ENCODE measurements at regions of chr22 and their contacts with region 1.

Region 1: DNA sequence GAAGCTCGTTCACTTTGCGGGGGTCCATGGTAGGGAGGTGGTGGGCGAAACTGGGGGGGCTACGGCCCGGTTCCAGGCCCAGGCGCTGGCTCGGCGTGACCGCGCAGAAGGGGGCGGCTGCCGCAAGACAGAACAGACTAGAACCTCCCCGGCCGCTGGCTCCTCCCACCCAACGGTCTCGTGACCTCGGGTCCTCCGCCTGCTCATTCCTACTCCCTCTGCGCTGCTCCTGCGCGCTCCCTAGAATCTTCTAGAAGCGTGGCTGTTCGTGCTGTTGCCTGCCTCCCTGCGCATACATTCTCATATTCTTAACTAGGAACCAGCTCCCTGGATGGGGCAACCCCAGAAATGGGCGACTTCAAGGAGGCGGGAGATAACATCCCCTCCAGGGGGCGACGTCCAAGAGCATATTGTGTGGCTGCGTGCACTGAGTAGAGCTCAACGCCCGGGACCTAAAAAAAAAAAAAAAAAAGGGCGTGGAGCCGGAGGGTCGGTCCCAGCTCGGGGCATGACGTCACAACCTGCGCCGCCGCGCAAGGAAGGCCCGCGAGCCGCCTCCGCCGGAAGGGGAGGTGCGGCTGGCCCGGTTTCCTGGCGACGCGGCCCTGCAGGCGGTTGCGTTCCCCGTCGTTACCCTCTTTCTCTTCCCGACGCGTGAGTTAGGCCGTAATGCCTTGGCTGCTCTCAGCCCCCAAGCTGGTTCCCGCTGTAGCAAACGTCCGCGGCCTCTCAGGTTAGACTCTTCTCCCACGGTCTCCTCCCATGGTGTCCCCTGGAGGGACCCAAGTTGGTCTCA is at the starts of genes ST13 and XPNPEP3:
- DNase-seq: peak; percentile 98
- ATAC-seq: peak; percentile 96 to 97
- H3K4me3 ChIP-seq: peak within 1 kb of the TSS; percentile 79 to 98 (median 90)
- H3K27ac ChIP-seq: peak within 1 kb of the TSS; percentile 96 to 99 (median 98)
- H3K4me1 ChIP-seq: peaks cover 48 to 56% of the 10 kb centered on the region in 2 donors
- H3K27me3 ChIP-seq: no peaks in the 10 kb centered on the region
- CTCF ChIP-seq: peak in 4 of 5 experiments; percentile 18 to 55 (median 25)
- POLR2A ChIP-seq: peak; percentile 88
- total RNA-seq, gene ST13: 122 to 265 (median 197) TPM
- total RNA-seq, gene XPNPEP3: 3.6 to 12.4 (median 7.4) TPM

Region 2: DNA sequence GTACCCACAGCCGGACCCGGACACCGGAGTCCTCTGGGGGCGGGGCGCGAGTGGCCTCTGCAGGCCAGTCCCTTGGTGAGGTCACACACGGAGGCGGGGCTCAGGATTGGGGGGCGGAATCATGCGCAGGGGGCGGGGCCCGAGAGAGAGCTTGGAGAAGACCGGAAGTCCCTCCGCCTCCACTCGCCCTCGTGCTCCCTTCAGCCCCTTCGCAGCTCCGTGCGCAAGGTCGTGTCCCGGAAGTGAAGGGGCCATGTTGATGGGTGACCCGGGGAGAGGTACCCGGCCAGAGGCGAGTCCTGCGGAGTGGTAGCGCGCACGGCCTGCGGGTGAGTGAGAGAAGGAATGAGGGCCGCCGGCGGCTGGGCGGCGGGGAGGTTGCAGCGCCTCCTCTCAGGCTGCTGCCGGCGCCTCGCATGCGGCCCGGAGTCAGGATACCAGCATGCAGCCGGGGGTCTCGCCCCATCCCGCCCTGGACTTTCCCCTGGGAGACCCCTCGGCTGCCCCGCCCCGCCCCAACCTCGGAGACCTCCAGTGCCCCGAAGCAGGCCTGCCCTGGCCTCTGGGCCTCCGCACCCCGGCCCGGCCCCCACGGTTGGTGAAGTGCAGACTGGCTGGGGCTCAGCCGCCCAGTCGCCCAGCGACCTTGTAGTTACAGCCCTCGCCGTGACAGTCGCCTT is 1354.5 kb before region 1 on chr22 and contains the start of gene MIEF1:
- in situ Hi-C with region 1: no loop called
- intact Hi-C with region 1: loop called (anchors 10 kb)
- DNase-seq: peak; percentile 97 to 98
- ATAC-seq: peak; percentile 95 to 97
- H3K4me3 ChIP-seq: peak within 1 kb of the TSS; percentile 89 to 94 (median 90)
- H3K27ac ChIP-seq: peak within 1 kb of the TSS; percentile 85 to 95 (median 90)
- H3K4me1 ChIP-seq: peaks cover 29 to 35% of the 10 kb centered on the region in 2 donors
- H3K27me3 ChIP-seq: no peaks in the 10 kb centered on the region
- CTCF ChIP-seq: no peak
- POLR2A ChIP-seq: peak; percentile 47 to 76
- total RNA-seq, gene MIEF1: 11.4 to 25.4 (median 12.9) TPM

Region 3: DNA sequence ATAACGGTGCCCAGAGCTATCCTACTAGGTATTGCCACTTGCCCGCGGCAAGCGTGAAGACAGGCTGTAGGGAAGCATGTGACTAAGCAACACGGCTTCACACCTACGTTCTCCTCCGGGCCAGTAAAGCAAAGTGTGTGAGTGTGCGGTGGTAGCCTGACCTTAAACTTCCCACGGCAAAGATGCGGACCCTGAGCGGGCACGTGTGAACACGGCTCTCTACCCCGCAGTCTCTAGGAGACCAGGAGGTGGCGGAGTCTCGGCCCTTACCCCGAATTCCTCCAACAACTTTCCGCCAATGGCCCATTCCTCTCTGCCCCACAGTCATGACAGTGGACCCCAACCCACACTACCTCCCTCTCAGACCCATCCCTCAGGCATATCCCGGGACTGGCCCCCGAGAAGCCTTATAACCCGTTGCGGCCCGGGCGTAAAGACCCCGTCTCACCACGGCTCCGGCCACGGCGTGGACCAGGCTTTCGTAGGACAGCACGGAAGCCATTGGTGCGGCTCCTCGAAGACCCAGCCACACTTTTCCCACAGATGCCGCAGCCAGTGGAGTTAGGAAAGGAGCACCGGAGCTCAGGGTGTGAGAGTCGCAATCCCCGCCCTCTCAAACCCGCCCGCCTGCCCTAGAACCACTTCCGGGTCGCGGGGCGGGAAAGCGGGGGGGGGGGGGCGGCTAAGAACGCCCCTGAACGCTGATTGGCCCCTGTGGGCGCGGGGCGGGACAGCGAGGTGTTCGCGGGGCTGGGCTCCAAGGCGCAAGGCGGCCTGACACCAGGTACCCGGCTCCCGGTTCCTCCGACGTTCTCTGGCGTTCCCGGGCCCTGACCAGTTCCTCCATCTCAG is 37.7 kb before region 1 on chr22 and contains the start of gene SLC25A17:
- in situ Hi-C with region 1: no loop called
- intact Hi-C with region 1: loop called (anchors 1 kb)
- DNase-seq: peak; percentile 82 to 87
- ATAC-seq: peak; percentile 85 to 87
- H3K4me3 ChIP-seq: peak within 1 kb of the TSS; percentile 82 to 100 (median 96)
- H3K27ac ChIP-seq: peak within 1 kb of the TSS; percentile 83 to 97 (median 90)
- H3K4me1 ChIP-seq: peaks cover 26 to 31% of the 10 kb centered on the region in 2 donors
- H3K27me3 ChIP-seq: no peaks in the 10 kb centered on the region
- CTCF ChIP-seq: peak; percentile 39 to 57 (median 44)
- POLR2A ChIP-seq: peak; percentile 63
- total RNA-seq, gene SLC25A17: 2.6 to 12.2 (median 3.8) TPM

Region 4: DNA sequence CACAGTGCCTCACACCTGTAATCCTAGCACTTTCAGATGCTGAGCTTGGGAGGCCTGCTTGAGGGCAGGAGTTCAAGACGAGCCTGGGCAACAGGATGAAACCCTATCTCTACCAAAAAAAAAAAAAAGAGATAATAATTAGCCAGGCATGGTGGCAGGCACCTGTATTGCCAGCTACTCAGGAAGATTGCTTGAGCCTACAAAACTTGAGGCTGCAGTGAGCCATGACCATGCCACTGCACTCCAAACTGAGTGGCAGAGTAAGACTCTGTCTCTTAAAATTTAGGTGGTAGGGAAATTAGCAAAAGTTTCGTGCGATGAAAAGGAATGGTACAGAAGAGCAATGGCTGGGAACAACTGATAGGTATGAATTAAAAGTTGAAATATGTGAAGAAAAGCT is 18.2 kb before region 1 on chr22:
- in situ Hi-C with region 1: no loop called
- intact Hi-C with region 1: no loop called
- DNase-seq: no peak
- ATAC-seq: no peak
- H3K4me3 ChIP-seq: no peak overlapping the region
- H3K27ac ChIP-seq: peak overlapping the region in 2 of 4 donors; percentile 13 to 25
- H3K4me1 ChIP-seq: peaks cover 10 to 16% of the 10 kb centered on the region in 2 donors
- H3K27me3 ChIP-seq: no peaks in the 10 kb centered on the region
- CTCF ChIP-seq: no peak
- POLR2A ChIP-seq: no peak

Region 5: DNA sequence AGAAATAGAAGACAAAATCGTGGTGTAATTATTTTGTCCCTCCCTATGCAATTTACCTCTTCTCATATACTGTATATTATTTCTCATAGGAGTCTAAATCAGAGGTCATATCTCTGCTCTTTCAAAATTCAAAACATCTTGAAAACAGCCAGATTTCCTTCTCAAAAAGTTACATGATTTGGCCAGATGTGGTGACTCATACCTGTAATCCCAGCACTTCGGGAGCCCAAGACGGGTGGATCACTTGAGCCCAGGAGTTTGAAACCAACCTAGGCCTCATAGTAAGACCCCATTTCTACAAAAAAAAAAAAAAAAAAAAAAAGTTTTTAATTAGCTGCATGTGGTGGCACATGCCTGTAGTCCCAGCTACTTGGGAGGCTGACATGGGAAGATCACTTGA is 34.2 kb after region 1 on chr22:
- in situ Hi-C with region 1: no loop called
- intact Hi-C with region 1: no loop called
- DNase-seq: no peak
- ATAC-seq: no peak
- H3K4me3 ChIP-seq: no peak overlapping the region
- H3K27ac ChIP-seq: no peak overlapping the region
- H3K4me1 ChIP-seq: no peaks in the 10 kb centered on the region
- H3K27me3 ChIP-seq: no peaks in the 10 kb centered on the region
- CTCF ChIP-seq: no peak
- POLR2A ChIP-seq: no peak

Region 6: DNA sequence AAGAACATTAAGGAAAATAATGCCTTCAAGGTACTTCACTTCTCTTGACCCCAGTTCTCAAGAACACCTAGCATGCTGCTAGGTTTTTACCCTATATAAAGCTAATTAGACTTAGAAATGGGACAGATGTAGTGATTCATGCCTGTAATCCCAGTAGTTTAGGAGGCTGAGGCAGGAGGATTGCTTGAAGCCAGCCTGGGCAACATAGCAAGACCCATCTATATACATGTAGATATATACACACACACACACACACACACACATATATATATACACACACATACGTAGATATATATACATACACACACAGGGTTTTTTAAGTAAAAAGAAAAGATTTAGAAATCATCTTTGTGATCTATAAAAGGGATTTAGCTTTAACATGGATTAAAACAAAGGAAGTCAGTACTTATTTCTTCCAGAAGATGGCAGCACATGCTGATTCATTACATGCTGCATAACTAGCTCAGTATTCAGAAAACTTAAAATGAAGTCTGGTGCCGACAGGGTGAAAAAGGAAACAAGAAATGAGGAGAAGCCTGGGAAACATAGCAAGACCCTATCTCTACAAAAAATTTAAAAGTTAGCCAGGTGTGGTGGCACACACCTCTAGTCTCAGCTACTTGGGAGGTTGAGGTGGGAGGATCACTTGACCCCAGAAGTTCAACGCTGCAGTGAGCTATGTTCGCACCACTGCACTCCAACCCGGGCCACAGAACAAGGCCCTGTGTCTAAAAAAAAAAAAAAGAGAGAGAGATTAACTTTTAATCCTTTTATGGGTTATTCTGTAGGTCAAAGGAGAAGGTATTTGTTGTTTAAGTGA is 66.0 kb after region 1 on chr22:
- in situ Hi-C with region 1: no loop called
- intact Hi-C with region 1: no loop called
- DNase-seq: peak in 1 of 2 donors; percentile 2
- ATAC-seq: peak; percentile 81 to 86
- H3K4me3 ChIP-seq: peak overlapping the region in 1 of 4 donors; percentile 20
- H3K27ac ChIP-seq: no peak overlapping the region
- H3K4me1 ChIP-seq: peaks cover 0 to 4% of the 10 kb centered on the region in 2 donors
- H3K27me3 ChIP-seq: no peaks in the 10 kb centered on the region
- CTCF ChIP-seq: peak; percentile 73 to 83 (median 79)
- POLR2A ChIP-seq: no peak

Region 7: GRCh38 chr22:41197038-41197972 is 340.6 kb after region 1 on chr22:
- in situ Hi-C with region 1: no loop called
- intact Hi-C with region 1: loop called (anchors 5 kb)
- DNase-seq: peak; percentile 57 to 76
- ATAC-seq: peak; percentile 90 to 91
- H3K4me3 ChIP-seq: peak overlapping the region; percentile 85 to 98 (median 93)
- H3K27ac ChIP-seq: peak overlapping the region; percentile 73 to 78 (median 76)
- H3K4me1 ChIP-seq: peaks cover 8 to 9% of the 10 kb centered on the region in 2 donors
- H3K27me3 ChIP-seq: no peaks in the 10 kb centered on the region
- CTCF ChIP-seq: peak in 2 of 5 experiments; percentile 23 to 39
- POLR2A ChIP-seq: peak; percentile 26 to 49

Region 8: GRCh38 chr22:41543854-41544670 is 687.4 kb after region 1 on chr22 and contains the start of gene POLR3H:
- in situ Hi-C with region 1: no loop called
- intact Hi-C with region 1: loop called (anchors 10 kb)
- DNase-seq: peak; percentile 96 to 98
- ATAC-seq: peak; percentile 91
- H3K4me3 ChIP-seq: peak within 1 kb of the TSS; percentile 78 to 90 (median 86)
- H3K27ac ChIP-seq: peak within 1 kb of the TSS; percentile 85 to 95 (median 88)
- H3K4me1 ChIP-seq: peaks cover 17 to 25% of the 10 kb centered on the region in 2 donors
- H3K27me3 ChIP-seq: no peaks in the 10 kb centered on the region
- CTCF ChIP-seq: peak; percentile 4 to 75 (median 49)
- POLR2A ChIP-seq: peak; percentile 66 to 69
- total RNA-seq, gene POLR3H: 5.7 to 11.0 (median 6.9) TPM

Measured in gastrocnemius medialis (tissue), 4 donors.